GM12878 (cell line): ENCODE measurements at regions of chr5 and their contacts with region 1.

Region 1: DNA sequence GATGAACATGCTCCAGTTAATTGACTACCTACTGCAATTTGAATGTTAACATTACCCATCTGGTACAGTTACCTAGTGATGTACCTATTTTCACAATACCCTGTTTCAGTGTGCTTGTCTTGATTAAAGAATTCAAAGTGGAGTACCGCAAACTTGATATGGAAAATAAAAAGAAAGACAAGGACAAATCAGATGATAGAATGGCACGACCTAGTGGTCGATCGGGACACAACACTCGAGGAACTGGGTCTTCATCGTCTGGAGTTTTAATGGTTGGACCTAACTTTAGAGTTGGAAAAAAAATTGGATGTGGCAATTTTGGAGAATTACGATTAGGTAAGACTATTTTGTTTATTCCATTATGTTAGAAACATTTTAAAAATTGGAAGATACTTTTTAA is 33.5 kb downstream of the CSNK1G3 start:
- DNase-seq: no peak
- ATAC-seq: no peak
- H3K4me3 ChIP-seq: no peak overlapping the region
- H3K27ac ChIP-seq: no peak overlapping the region
- H3K4me1 ChIP-seq: peaks cover 14% of the 10 kb centered on the region
- H3K27me3 ChIP-seq: no peaks in the 10 kb centered on the region
- CTCF ChIP-seq: peak; percentile 26 to 39 (median 38); a peak in 5 of 6 replicates
- EP300 ChIP-seq: no peak
- POLR2A ChIP-seq: no peak
- RAD21 ChIP-seq: 0 out of 2 replicates have a peak, but pooled peaks have one; percentile 12

Region 2: GRCh38 chr5:123450640-123451039 is 94.9 kb before region 1 on chr5:
- CTCF ChIA-PET with region 1: interaction called, 3 read pairs
- POLR2A ChIA-PET with region 1: no interaction called
- RAD21 ChIA-PET with region 1: interaction called, 5 read pairs
- SMC1A ChIA-PET with region 1: interaction called, 11 read pairs
- in situ Hi-C with region 1: no loop called
- intact Hi-C with region 1: loop called (anchors 5 kb)
- DNase-seq: no peak
- ATAC-seq: no peak
- H3K4me3 ChIP-seq: no peak overlapping the region
- H3K27ac ChIP-seq: peak overlapping the region; percentile 6; the same call in 1 of the 2 replicates
- H3K4me1 ChIP-seq: peaks cover 40% of the 10 kb centered on the region
- H3K27me3 ChIP-seq: no peaks in the 10 kb centered on the region
- CTCF ChIP-seq: no peak
- EP300 ChIP-seq: no peak
- POLR2A ChIP-seq: no peak
- RAD21 ChIP-seq: no peak

Region 3: GRCh38 chr5:123511648-123512605 is 33.6 kb before region 1 on chr5 and contains the start of gene CSNK1G3:
- CTCF ChIA-PET with region 1: interaction called, 6 read pairs
- POLR2A ChIA-PET with region 1: interaction called, 5 read pairs
- RAD21 ChIA-PET with region 1: interaction called, 17 read pairs
- SMC1A ChIA-PET with region 1: interaction called, 22 read pairs
- in situ Hi-C with region 1: no loop called
- intact Hi-C with region 1: loop called (anchors 2 kb)
- DNase-seq: peak; percentile 82
- ATAC-seq: peak; percentile 95
- H3K4me3 ChIP-seq: peak within 1 kb of the TSS; percentile 82
- H3K27ac ChIP-seq: peak within 1 kb of the TSS; percentile 83
- H3K4me1 ChIP-seq: peaks cover 9% of the 10 kb centered on the region
- H3K27me3 ChIP-seq: no peaks in the 10 kb centered on the region
- CTCF ChIP-seq: peak in 1 of 3 experiments; percentile 19; a peak in 2 of 6 replicates
- EP300 ChIP-seq: no peak
- POLR2A ChIP-seq: peak; percentile 96
- RAD21 ChIP-seq: no peak
- polyA plus RNA-seq, gene CSNK1G3: 7.4 to 7.8 TPM

Region 4: GRCh38 chr5:123518111-123518510 is 27.4 kb before region 1 on chr5:
- CTCF ChIA-PET with region 1: interaction called, 6 read pairs
- POLR2A ChIA-PET with region 1: interaction called, 5 read pairs
- RAD21 ChIA-PET with region 1: interaction called, 17 read pairs
- SMC1A ChIA-PET with region 1: interaction called, 22 read pairs
- in situ Hi-C with region 1: no loop called
- intact Hi-C with region 1: loop called (anchors 2 kb)
- DNase-seq: no peak
- ATAC-seq: peak; percentile 19
- H3K4me3 ChIP-seq: peak overlapping the region; percentile 48; the same call in 1 of the 2 replicates
- H3K27ac ChIP-seq: peak overlapping the region; percentile 70
- H3K4me1 ChIP-seq: peaks cover 41% of the 10 kb centered on the region
- H3K27me3 ChIP-seq: no peaks in the 10 kb centered on the region
- CTCF ChIP-seq: no peak
- EP300 ChIP-seq: no peak
- POLR2A ChIP-seq: no peak
- RAD21 ChIP-seq: no peak

Region 5: GRCh38 chr5:123527190-123527589 is 18.3 kb before region 1 on chr5:
- CTCF ChIA-PET with region 1: interaction called, 8 read pairs
- POLR2A ChIA-PET with region 1: interaction called, 3 read pairs
- RAD21 ChIA-PET with region 1: interaction called, 23 read pairs
- SMC1A ChIA-PET with region 1: interaction called, 18 read pairs
- in situ Hi-C with region 1: no loop called
- intact Hi-C with region 1: loop called (anchors 2 kb)
- DNase-seq: no peak
- ATAC-seq: peak; percentile 74
- H3K4me3 ChIP-seq: no peak overlapping the region
- H3K27ac ChIP-seq: no peak overlapping the region
- H3K4me1 ChIP-seq: peaks cover 13% of the 10 kb centered on the region
- H3K27me3 ChIP-seq: no peaks in the 10 kb centered on the region
- CTCF ChIP-seq: no peak
- EP300 ChIP-seq: no peak
- POLR2A ChIP-seq: no peak
- RAD21 ChIP-seq: no peak

Region 6: DNA sequence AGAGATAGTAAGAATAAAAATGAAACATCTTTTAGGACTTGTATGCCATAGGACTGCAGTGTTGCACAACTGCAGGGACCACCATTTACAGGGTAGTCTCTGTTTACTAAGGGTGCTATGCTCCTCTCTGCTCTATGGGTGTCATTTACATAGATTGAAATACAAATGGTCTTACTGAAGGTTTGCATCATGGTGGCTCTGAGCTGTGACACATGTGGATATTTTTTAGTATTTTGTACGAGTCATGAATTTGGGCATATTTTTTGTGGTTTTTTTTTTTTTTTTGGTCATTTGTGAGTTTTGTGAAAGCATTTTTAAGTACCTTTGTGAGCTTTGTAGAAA is 13.9 kb after region 1 on chr5:
- CTCF ChIA-PET with region 1: interaction called, 5 read pairs
- POLR2A ChIA-PET with region 1: no interaction called
- RAD21 ChIA-PET with region 1: interaction called, 3 read pairs
- SMC1A ChIA-PET with region 1: interaction called, 14 read pairs
- in situ Hi-C with region 1: no loop called
- intact Hi-C with region 1: no loop called
- DNase-seq: no peak
- ATAC-seq: no peak
- H3K4me3 ChIP-seq: no peak overlapping the region
- H3K27ac ChIP-seq: no peak overlapping the region
- H3K4me1 ChIP-seq: no peaks in the 10 kb centered on the region
- H3K27me3 ChIP-seq: no peaks in the 10 kb centered on the region
- CTCF ChIP-seq: no peak
- EP300 ChIP-seq: no peak
- POLR2A ChIP-seq: no peak
- RAD21 ChIP-seq: no peak